Right cardiac atrium (tissue), 5 donors: ENCODE measurements at regions of chr2 and their contacts with region 1.

Region 1: DNA sequence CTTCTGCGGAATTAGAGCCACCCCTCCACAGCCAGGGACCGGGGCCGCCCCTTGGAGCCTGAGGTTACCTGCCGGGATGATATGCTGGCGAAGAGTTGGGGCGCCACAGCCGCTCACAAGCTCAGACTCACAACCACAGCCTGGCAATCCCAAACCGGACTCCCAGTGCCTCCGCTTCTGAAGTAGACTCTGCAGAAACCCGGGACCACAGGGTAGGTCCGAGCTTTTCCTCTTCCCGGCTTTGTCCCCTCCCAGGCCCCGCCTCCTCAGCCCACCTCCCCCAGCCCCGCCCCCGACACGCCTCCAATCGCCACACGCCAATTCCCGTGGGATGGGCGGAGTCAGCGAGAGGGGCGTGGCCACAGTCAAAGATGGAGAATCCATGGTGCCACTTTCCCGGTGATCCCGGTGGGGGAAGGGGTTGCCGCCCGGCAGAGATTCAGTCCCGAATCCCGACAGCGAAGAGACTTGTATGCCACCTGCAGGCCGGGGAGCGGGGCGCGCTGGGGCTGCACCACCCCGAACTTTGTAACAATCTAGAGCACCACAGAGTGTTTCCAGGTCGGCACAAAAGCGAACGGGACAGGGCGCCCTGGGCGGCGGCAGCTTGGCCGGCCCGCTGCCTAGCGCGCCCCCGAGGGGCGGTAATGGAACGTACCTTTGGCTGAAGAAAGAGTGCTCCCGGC is at the start of gene IDH1:
- DNase-seq: peak; percentile 96 to 99 (median 99)
- ATAC-seq: peak; percentile 97 to 98
- H3K4me3 ChIP-seq: peak within 1 kb of the TSS; percentile 85
- H3K27ac ChIP-seq: peak within 1 kb of the TSS; percentile 74
- H3K4me1 ChIP-seq: no peaks in the 10 kb centered on the region
- H3K27me3 ChIP-seq: no peaks in the 10 kb centered on the region
- total RNA-seq, gene IDH1: 27.0 to 45.0 (median 37.2) TPM

Region 2: GRCh38 chr2:208101716-208102631 is 153.0 kb before region 1 on chr2:
- intact Hi-C with region 1: loop called in 1 of 4 experiments (anchors 5 kb)
- DNase-seq: no peak
- ATAC-seq: peak in 1 of 2 donors; percentile 57
- H3K4me3 ChIP-seq: no peak overlapping the region
- H3K27ac ChIP-seq: no peak overlapping the region
- H3K4me1 ChIP-seq: no peaks in the 10 kb centered on the region
- H3K27me3 ChIP-seq: no peaks in the 10 kb centered on the region

Region 3: DNA sequence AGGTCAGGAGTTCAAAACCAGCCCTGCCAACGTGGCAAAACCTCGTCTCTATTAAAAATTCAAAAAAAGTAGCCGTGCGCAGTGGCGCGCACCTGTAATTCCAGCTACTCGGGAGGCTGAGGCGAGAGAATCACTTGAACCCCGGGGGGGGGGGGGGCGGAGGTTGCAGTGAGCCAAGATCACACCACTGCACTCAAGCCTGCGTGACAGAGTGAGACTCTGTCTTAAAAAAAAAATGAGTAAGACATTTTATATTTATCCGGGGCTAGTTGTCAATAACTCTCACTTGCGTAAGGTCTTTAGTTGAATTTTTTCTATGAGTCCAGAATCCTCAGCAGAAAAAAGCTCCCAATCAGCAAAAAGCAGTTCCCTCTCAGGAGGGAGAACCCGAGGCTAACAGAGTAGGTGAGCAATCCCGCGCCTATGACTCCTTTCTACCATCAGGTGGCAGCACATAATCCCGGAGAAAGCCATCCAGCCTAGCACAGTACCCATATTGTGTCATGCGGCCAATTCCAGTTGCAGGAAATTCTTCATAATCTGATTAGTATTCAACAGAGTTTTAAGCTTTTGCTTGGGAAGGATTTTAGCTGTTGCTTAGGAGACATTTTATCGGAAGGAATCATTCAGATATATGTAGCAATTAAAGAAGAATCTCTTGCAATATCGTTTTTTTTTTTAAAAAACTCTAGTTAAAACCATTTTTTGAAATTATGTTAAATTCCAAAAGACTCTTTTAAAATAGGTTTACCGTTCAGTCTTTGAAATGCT is 79.8 kb before region 1 on chr2:
- intact Hi-C with region 1: loop called in 1 of 4 experiments (anchors 5 kb)
- DNase-seq: peak; percentile 65 to 87 (median 74)
- ATAC-seq: peak; percentile 95 to 97
- H3K4me3 ChIP-seq: no peak overlapping the region
- H3K27ac ChIP-seq: no peak overlapping the region
- H3K4me1 ChIP-seq: no peaks in the 10 kb centered on the region
- H3K27me3 ChIP-seq: no peaks in the 10 kb centered on the region

Region 4: DNA sequence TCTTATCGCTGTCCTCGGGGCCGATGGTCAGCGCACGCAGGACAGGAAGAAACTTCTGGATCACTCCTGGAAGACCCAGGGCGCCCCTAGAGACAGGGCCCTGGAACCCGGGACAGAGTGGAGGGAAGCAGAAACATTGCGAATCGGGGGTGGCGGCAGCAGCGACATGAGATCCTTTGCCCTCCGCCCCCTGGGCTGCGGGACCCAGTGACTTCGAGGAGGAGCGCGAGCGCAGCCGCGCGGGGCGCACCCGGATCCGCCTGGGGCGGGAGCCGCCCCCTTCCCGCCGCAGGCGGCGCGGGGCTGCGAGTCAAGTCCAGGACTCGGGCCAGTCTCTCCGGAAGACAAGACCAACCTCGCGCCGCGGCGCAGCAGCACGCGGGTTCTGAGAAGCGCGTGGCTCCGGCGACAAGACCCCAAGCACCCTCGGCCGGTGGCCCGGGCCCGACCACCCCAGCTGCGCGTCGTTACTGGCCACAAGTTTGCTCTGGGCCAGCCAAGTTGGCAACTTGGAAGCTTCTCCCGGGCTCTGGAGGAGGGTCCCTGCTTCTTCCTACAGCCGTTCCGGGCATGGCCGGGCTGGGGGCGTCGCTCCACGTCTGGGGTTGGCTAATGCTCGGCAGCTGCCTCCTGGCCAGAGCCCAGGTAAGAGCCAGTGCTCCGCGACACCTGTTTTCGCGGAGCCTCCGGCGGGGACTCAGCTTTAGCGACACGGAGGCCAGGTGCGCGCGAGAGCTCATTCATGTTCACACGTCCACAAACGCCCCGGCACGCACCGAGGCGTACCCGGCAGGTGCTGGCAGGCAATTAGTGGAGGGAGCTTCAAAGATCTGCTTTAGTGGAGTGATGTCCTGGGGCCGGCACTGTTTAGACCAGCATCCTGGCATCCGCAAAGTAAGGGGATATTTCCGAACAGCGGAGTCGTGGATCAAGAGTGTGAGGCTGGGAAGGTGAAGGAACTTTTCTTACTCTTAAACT is 151.7 kb after region 1 on chr2 and contains the start of gene PTH2R:
- intact Hi-C with region 1: no loop called
- DNase-seq: peak in 2 of 3 donors; percentile 32 to 39
- ATAC-seq: peak; percentile 31 to 49
- H3K4me3 ChIP-seq: peak within 1 kb of the TSS; percentile 13
- H3K27ac ChIP-seq: no peak within 1 kb of the TSS
- H3K4me1 ChIP-seq: no peaks in the 10 kb centered on the region
- H3K27me3 ChIP-seq: peaks cover 2% of the 10 kb centered on the region
- total RNA-seq, gene PTH2R: not detected

Region 5: DNA sequence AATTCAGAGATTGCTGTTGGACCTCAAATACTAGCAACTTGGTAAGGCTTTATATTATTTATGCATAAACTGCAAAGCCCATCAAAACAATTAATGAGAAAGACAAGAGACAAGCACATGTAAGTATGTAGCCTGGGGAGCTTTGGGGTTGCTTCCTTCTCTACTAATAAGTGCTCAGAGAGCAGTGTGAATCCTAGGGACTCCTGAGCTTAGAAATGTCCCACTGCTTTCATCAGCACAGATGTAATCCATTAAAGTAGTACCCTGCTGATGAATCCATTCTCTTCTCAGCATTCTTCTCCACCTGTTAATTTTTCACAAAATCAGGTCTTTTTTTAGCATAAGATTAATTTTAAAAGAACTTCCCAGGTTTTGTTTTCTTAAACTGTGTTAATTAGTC is 637.2 kb after region 1 on chr2:
- intact Hi-C with region 1: no loop called
- DNase-seq: no peak
- ATAC-seq: no peak
- H3K4me3 ChIP-seq: no peak overlapping the region
- H3K27ac ChIP-seq: no peak overlapping the region
- H3K4me1 ChIP-seq: no peaks in the 10 kb centered on the region
- H3K27me3 ChIP-seq: no peaks in the 10 kb centered on the region